Endothelial cell of umbilical vein (primary cell): ENCODE measurements at regions of chr9 and their contacts with region 1.

Region 1: DNA sequence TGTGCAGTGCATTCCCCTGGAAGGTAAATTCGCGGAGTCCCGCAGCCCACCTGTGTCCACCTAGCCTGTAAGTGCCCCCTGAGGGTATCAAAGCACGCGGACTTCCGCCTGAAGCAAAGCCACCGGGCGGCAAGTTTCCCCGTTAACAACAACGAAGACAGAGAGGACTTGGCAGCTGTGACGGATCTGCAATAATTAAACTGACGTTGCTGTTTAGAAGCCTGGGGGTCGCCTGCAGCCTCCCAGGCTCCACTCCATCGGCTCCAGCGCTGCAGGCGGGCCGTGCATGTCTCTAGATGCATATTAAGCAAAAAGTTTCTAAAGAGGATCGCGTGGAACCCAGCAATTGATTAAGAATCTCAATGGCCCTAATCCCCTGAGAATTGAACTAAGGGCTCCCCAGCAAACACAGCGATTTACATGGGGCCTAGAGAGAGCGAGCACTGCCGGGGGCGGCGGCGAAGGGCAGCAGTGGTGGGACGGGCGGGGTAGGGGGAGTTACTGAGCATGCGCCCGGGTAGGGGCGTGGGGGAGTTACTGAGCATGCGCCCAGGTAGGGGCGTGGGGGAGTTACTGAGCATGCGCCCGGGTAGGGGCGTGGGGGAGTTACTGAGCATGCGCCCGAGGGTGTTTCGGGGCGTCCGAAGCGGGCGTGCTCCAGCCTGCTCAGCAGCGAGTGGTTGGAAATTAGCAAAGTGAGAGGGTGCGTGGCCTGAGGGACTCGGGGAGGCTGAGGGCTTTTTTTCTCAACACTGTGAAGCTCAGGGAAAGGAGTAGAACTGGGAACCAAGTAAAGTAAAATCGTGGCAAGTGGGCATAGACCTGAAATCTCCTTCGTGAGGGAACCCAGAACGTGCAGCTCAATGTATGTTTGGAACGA is 255.2 kb downstream of the DOCK8 start:
- DNase-seq: peak; percentile 90
- H3K4me3 ChIP-seq: peak overlapping the region; percentile 46 to 82 (median 70)
- H3K27ac ChIP-seq: no peak overlapping the region
- H3K4me1 ChIP-seq: peaks cover 6% of the 10 kb centered on the region
- H3K27me3 ChIP-seq: no peaks in the 10 kb centered on the region
- CTCF ChIP-seq: no peak
- POLR2A ChIP-seq: peak; percentile 58

Region 2: DNA sequence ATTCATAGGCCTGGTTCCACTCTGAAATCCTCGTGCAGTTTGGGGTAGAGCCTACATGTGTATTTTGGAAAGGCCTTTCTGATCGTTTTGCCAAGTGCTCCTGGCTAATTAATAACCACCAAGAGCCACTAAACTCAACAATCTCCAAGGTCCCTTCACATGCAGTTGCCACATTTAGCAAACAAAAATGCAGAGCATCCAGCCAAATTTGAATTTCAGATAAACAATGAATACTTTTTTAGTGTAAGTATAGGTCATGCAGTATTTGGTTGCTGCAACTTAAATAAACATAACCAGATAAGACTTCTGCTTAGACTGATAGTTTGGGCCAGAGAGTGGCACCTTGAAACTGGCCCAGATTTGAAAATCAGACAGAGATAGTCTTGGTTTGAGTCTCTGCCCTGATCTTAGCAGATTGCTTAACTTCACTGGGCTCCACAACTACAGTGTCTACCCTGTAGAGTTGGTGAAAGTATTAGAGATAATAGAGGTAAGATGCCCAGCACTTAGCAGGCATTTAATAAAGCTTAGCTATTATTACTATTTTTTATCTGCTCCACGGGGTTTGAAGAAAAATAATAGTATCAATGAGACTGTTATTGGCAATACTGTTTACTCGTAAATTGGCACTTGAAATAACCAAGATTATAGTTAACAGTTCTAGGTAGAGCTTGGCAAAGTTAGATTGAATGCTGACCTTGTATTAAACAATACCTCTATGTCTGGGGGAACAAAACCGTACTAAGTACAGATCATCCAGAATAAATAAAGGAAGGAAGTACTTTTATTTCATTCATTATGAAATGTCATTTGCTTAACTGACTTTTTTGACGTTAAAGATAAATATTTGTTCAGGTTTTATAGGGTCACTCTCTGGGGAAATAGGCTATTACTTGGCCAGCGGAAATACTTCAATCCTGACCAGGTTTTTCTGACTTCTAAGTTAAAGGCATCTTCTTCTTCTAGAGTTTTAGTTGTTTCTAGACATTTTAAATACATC is 19.6 kb after region 1 on chr9:
- CTCF ChIA-PET with region 1: interaction called, 3 read pairs
- POLR2A ChIA-PET with region 1: no interaction called
- dilution Hi-C with region 1: no loop called
- intact Hi-C with region 1: loop called (anchors 1 kb)
- DNase-seq: peak; percentile 22
- H3K4me3 ChIP-seq: no peak overlapping the region
- H3K27ac ChIP-seq: no peak overlapping the region
- H3K4me1 ChIP-seq: peaks cover 9% of the 10 kb centered on the region
- H3K27me3 ChIP-seq: peaks cover 6 to 7% of the 10 kb centered on the region in 2 experiments
- CTCF ChIP-seq: no peak
- POLR2A ChIP-seq: no peak